T-cell (primary cell): ENCODE measurements at regions of chr6 and their contacts with region 1.

Region 1: GRCh38 chr6:70667711-70668498 is at the start of gene SMAP1:
- DNase-seq: peak; percentile 75 to 96 (median 86)
- ATAC-seq: peak; percentile 92 to 95 (median 94)
- H3K4me3 ChIP-seq: peak within 1 kb of the TSS; percentile 75 to 89
- H3K4me3 Mint-ChIP-seq: peak within 1 kb of the TSS; percentile 85 to 93 (median 86)
- H3K27ac ChIP-seq: peak within 1 kb of the TSS; percentile 79
- H3K27ac Mint-ChIP-seq: peak within 1 kb of the TSS; percentile 95 to 97
- H3K4me1 ChIP-seq: peaks cover 16 to 22% of the 10 kb centered on the region in 2 experiments
- H3K4me1 Mint-ChIP-seq: peaks cover 54 to 60% (median 56%) of the 10 kb centered on the region in 3 donors
- H3K27me3 ChIP-seq: peaks cover 0 to 3% of the 10 kb centered on the region in 2 experiments
- H3K27me3 Mint-ChIP-seq: no peaks in the 10 kb centered on the region
- total RNA-seq, gene SMAP1: 27.1 to 32.3 (median 31.9) TPM

Region 2: DNA sequence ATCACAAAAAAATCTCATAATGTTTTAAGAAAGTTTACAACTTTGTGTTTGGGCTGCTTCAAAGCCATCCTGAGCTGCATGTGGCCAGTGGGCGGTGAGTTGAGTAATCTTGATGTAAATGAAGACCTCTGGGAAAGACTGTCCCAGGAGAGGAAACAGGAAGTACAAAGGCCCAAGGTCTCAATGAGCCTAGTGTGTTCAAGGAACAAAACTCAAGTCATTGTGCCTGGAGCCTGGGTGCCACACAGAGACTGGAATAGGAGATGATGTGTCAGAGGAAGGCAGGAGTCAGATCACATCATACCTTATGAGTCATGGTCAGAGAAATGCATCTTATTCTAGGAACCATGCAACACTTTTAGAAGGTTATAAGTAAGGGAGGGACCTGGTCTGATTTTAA is 750.1 kb before region 1 on chr6:
- CTCF ChIA-PET with region 1: no interaction called
- POLR2A ChIA-PET with region 1: interaction called in 1 of 2 experiments, 10 read pairs
- DNase-seq: no peak
- ATAC-seq: no peak
- H3K4me3 ChIP-seq: no peak overlapping the region
- H3K4me3 Mint-ChIP-seq: no peak overlapping the region
- H3K27ac ChIP-seq: no peak overlapping the region
- H3K27ac Mint-ChIP-seq: no peak overlapping the region
- H3K4me1 ChIP-seq: no peaks in the 10 kb centered on the region
- H3K4me1 Mint-ChIP-seq: no peaks in the 10 kb centered on the region
- H3K27me3 ChIP-seq: peaks cover 0 to under 1% of the 10 kb centered on the region in 2 experiments
- H3K27me3 Mint-ChIP-seq: peaks cover 0 to 5% of the 10 kb centered on the region in 2 donors

Region 3: DNA sequence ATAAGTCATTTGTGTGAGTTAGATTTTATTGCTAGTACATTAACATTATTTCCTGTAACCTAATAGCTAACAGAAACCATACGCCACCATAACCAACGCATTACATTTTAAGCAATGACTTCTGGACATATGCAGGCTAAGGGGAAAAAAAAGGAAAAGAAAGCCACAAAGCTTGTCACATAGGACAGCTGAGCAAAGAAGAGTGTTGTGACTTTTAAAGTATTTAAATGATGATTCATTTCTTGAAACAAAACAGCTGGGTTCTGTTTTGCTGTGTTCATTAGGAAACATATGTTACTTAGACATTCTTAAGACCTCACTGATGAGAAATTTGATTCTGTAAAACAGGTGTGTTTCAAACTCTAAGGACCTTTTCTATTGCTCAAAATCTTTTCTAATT is 536.4 kb before region 1 on chr6:
- CTCF ChIA-PET with region 1: no interaction called
- POLR2A ChIA-PET with region 1: no interaction called
- DNase-seq: no peak
- ATAC-seq: no peak
- H3K4me3 ChIP-seq: no peak overlapping the region
- H3K4me3 Mint-ChIP-seq: no peak overlapping the region
- H3K27ac ChIP-seq: no peak overlapping the region
- H3K27ac Mint-ChIP-seq: no peak overlapping the region
- H3K4me1 ChIP-seq: no peaks in the 10 kb centered on the region
- H3K4me1 Mint-ChIP-seq: no peaks in the 10 kb centered on the region
- H3K27me3 ChIP-seq: peaks cover 0 to 3% of the 10 kb centered on the region in 2 experiments
- H3K27me3 Mint-ChIP-seq: no peaks in the 10 kb centered on the region

Region 4: GRCh38 chr6:70651326-70651905 is 16.5 kb before region 1 on chr6:
- CTCF ChIA-PET with region 1: interaction called, 6 to 11 read pairs
- POLR2A ChIA-PET with region 1: interaction called, 3 to 6 read pairs
- DNase-seq: peak in 34 of 35 experiments; percentile 15 to 63 (median 42)
- ATAC-seq: peak; percentile 88 to 97 (median 92)
- H3K4me3 ChIP-seq: no peak overlapping the region
- H3K4me3 Mint-ChIP-seq: peak overlapping the region; percentile 40 to 59 (median 59)
- H3K27ac ChIP-seq: peak overlapping the region; percentile 54
- H3K27ac Mint-ChIP-seq: peak overlapping the region; percentile 92
- H3K4me1 ChIP-seq: peaks cover 17 to 18% of the 10 kb centered on the region in 2 experiments
- H3K4me1 Mint-ChIP-seq: peaks cover 27 to 35% (median 30%) of the 10 kb centered on the region in 3 donors
- H3K27me3 ChIP-seq: no peaks in the 10 kb centered on the region
- H3K27me3 Mint-ChIP-seq: no peaks in the 10 kb centered on the region

Region 5: GRCh38 chr6:70725817-70726415 is 58.0 kb after region 1 on chr6:
- CTCF ChIA-PET with region 1: no interaction called
- POLR2A ChIA-PET with region 1: no interaction called
- DNase-seq: no peak
- ATAC-seq: no peak
- H3K4me3 ChIP-seq: no peak overlapping the region
- H3K4me3 Mint-ChIP-seq: no peak overlapping the region
- H3K27ac ChIP-seq: no peak overlapping the region
- H3K27ac Mint-ChIP-seq: no peak overlapping the region
- H3K4me1 ChIP-seq: peaks cover 0 to 2% of the 10 kb centered on the region in 2 experiments
- H3K4me1 Mint-ChIP-seq: peaks cover 47 to 68% (median 65%) of the 10 kb centered on the region in 3 donors
- H3K27me3 ChIP-seq: no peaks in the 10 kb centered on the region
- H3K27me3 Mint-ChIP-seq: no peaks in the 10 kb centered on the region